Aorta (tissue), 5 donors: ENCODE measurements at regions of chr16 and their contacts with region 1.

Region 1: GRCh38 chr16:82067042-82067803 is 32.2 kb downstream of the HSD17B2 start:
- DNase-seq: no peak
- ATAC-seq: no peak
- H3K4me3 ChIP-seq: no peak overlapping the region
- H3K27ac ChIP-seq: no peak overlapping the region
- H3K4me1 ChIP-seq: no peaks in the 10 kb centered on the region
- H3K27me3 ChIP-seq: no peaks in the 10 kb centered on the region

Region 2: GRCh38 chr16:82220329-82220940 is 153.2 kb after region 1 on chr16:
- intact Hi-C with region 1: loop called in 1 of 2 experiments (anchors 5 kb)
- DNase-seq: no peak
- ATAC-seq: no peak
- H3K4me3 ChIP-seq: no peak overlapping the region
- H3K27ac ChIP-seq: no peak overlapping the region
- H3K4me1 ChIP-seq: no peaks in the 10 kb centered on the region
- H3K27me3 ChIP-seq: no peaks in the 10 kb centered on the region